Naive thymus-derived CD4-positive, alpha-beta T cell (primary cell): ENCODE measurements at regions of chr3 and their contacts with region 1.

Region 1: GRCh38 chr3:49939858-49940666 is at the start of gene RBM6:
- DNase-seq: peak; percentile 84 to 95 (median 93)
- ATAC-seq: peak; percentile 98
- H3K4me3 ChIP-seq: peak within 1 kb of the TSS; percentile 88
- H3K4me3 Mint-ChIP-seq: peak within 1 kb of the TSS; percentile 93 to 100 (median 98)
- H3K27ac ChIP-seq: peak within 1 kb of the TSS; percentile 97
- H3K27ac Mint-ChIP-seq: peak within 1 kb of the TSS; percentile 91 to 99 (median 97)
- H3K4me1 ChIP-seq: peaks cover 8 to 15% of the 10 kb centered on the region in 2 donors
- H3K4me1 Mint-ChIP-seq: peaks cover 7 to 41% (median 32%) of the 10 kb centered on the region in 7 donors
- H3K27me3 ChIP-seq: no peaks in the 10 kb centered on the region
- H3K27me3 Mint-ChIP-seq: peaks cover 0 to 1% (median 0%) of the 10 kb centered on the region in 5 donors
- total RNA-seq, gene RBM6: 103 to 208 (median 153) TPM

Region 2: GRCh38 chr3:49786241-49786958 is 153.7 kb before region 1 on chr3 and contains the start of gene IP6K1:
- CTCF ChIA-PET with region 1: no interaction called
- POLR2A ChIA-PET with region 1: no interaction called
- intact Hi-C with region 1: loop called in 1 of 2 experiments (anchors 1 kb)
- DNase-seq: peak; percentile 90 to 100 (median 99)
- ATAC-seq: peak; percentile 99
- H3K4me3 ChIP-seq: peak within 1 kb of the TSS; percentile 80
- H3K4me3 Mint-ChIP-seq: peak within 1 kb of the TSS; percentile 91 to 99 (median 94)
- H3K27ac ChIP-seq: peak within 1 kb of the TSS; percentile 95
- H3K27ac Mint-ChIP-seq: peak within 1 kb of the TSS; percentile 96 to 100 (median 99)
- H3K4me1 ChIP-seq: peaks cover 9 to 12% of the 10 kb centered on the region in 2 donors
- H3K4me1 Mint-ChIP-seq: peaks cover 15 to 50% (median 32%) of the 10 kb centered on the region in 7 donors
- H3K27me3 ChIP-seq: no peaks in the 10 kb centered on the region
- H3K27me3 Mint-ChIP-seq: peaks cover 0 to 6% (median 0%) of the 10 kb centered on the region in 5 donors
- total RNA-seq, gene IP6K1: 41.8 to 57.0 (median 47.3) TPM

Region 3: GRCh38 chr3:49906004-49906743 is 33.9 kb before region 1 on chr3:
- CTCF ChIA-PET with region 1: no interaction called
- POLR2A ChIA-PET with region 1: interaction called, 4 read pairs
- intact Hi-C with region 1: loop called (anchors 1 to 2 kb)
- DNase-seq: peak; percentile 16 to 60 (median 39)
- ATAC-seq: peak; percentile 53
- H3K4me3 ChIP-seq: no peak overlapping the region
- H3K4me3 Mint-ChIP-seq: peak overlapping the region; percentile 39 to 79 (median 64)
- H3K27ac ChIP-seq: peak overlapping the region; percentile 24
- H3K27ac Mint-ChIP-seq: peak overlapping the region; percentile 63 to 91 (median 87)
- H3K4me1 ChIP-seq: peaks cover 15 to 26% of the 10 kb centered on the region in 2 donors
- H3K4me1 Mint-ChIP-seq: peaks cover 18 to 41% (median 27%) of the 10 kb centered on the region in 7 donors
- H3K27me3 ChIP-seq: no peaks in the 10 kb centered on the region
- H3K27me3 Mint-ChIP-seq: no peaks in the 10 kb centered on the region

Region 4: DNA sequence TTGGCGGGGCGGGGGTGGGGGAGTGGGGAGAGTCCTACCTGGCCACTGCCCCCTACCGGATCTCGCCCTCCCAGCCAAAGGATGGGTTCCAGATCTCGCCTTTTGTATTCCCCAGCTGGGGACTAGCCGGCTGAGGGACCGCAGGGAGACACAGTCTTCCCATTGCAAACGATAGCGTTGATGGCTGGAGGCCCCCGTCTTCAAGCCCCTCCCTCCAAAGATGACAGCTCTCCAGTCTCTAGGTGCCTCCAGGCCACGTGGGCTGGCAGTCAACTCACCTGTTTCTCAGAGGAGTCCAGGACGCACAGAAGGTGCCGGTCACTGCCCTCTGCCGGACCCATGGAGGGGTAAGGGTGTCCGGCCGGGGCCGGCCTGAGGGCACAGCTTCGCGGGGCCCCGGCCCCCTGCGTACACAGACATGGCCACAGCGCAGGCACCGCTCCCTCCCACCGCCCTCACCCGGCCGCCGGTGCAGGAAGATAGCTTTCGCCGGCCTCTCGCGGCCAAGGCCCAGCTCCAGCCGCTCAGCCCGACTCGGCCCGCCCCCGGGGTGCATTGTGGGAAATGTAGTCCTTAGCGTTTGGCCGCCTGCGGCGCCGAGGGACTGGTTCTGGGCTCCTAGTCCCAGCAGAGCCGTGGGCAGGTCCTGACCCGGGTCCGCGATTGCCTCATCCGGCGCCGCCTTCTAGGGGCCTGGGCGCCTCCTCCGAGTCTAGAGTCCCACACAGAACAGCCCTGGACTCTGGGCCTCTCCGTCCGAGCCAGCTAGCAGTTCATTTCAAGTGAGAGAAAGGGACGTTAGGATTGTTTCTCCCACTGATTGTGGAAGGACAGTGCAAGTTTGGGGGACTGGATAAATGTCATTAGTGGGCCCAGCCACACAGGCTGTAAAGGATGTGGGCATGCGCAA is 10.5 kb before region 1 on chr3 and contains the start of gene MON1A:
- CTCF ChIA-PET with region 1: interaction called, 3 read pairs
- POLR2A ChIA-PET with region 1: interaction called, 17 read pairs
- intact Hi-C with region 1: loop called (anchors 1 kb)
- DNase-seq: peak; percentile 65 to 94 (median 74)
- ATAC-seq: peak; percentile 97
- H3K4me3 ChIP-seq: peak within 1 kb of the TSS; percentile 92
- H3K4me3 Mint-ChIP-seq: peak within 1 kb of the TSS; percentile 82 to 90 (median 86)
- H3K27ac ChIP-seq: peak within 1 kb of the TSS; percentile 91
- H3K27ac Mint-ChIP-seq: peak within 1 kb of the TSS; percentile 78 to 92 (median 88)
- H3K4me1 ChIP-seq: peaks cover 6 to 13% of the 10 kb centered on the region in 2 donors
- H3K4me1 Mint-ChIP-seq: peaks cover 6 to 36% (median 31%) of the 10 kb centered on the region in 7 donors
- H3K27me3 ChIP-seq: no peaks in the 10 kb centered on the region
- H3K27me3 Mint-ChIP-seq: no peaks in the 10 kb centered on the region
- total RNA-seq, gene MON1A: 4.6 to 12.6 (median 8.6) TPM

Region 5: GRCh38 chr3:50088725-50089608 is 148.9 kb after region 1 on chr3 and contains the start of gene RBM5:
- CTCF ChIA-PET with region 1: no interaction called
- POLR2A ChIA-PET with region 1: no interaction called
- intact Hi-C with region 1: loop called (anchors 2 kb)
- DNase-seq: peak; percentile 71 to 91 (median 89)
- ATAC-seq: peak; percentile 100
- H3K4me3 ChIP-seq: peak within 1 kb of the TSS; percentile 88
- H3K4me3 Mint-ChIP-seq: peak within 1 kb of the TSS; percentile 94 to 98 (median 96)
- H3K27ac ChIP-seq: peak within 1 kb of the TSS; percentile 98
- H3K27ac Mint-ChIP-seq: peak within 1 kb of the TSS; percentile 94 to 99 (median 97)
- H3K4me1 ChIP-seq: peaks cover 16 to 23% of the 10 kb centered on the region in 2 donors
- H3K4me1 Mint-ChIP-seq: peaks cover 24 to 36% (median 32%) of the 10 kb centered on the region in 7 donors
- H3K27me3 ChIP-seq: no peaks in the 10 kb centered on the region
- H3K27me3 Mint-ChIP-seq: no peaks in the 10 kb centered on the region
- total RNA-seq, gene RBM5: 223 to 420 (median 342) TPM

Region 6: DNA sequence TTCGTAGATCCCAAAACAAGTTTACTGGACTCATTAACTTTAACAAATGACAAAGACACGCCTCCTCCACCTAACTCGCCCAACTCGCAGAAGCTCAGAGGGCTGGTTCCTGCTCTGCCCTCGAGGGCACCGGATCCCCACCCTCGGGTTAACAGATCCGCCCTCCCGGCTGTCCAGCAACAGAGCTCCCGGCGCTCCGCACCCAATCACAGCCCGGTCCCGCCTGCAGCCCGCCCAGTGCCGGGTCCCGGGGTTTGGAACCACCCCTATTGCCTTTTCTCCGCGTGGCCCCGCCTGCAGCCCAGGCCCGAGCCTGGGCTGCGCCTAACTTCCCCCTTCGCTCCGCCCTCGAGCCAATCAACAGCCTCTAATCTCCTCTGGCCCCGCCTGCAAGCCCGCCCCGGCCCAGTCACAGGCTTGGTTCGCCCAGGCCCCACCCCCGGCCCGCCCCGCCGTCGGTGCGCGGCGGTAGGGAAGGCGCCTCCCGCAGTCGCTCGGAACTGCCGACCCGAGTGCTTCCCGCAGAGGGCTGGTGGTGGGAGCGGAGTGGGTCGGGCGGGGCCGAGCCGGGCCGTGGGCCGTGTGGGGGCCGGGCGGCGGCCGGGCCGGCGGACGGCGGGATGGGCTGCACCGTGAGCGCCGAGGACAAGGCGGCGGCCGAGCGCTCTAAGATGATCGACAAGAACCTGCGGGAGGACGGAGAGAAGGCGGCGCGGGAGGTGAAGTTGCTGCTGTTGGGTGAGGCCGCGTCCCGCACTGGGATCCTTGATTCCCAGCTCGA is 295.8 kb after region 1 on chr3 and contains the start of gene GNAI2:
- CTCF ChIA-PET with region 1: no interaction called
- POLR2A ChIA-PET with region 1: no interaction called
- intact Hi-C with region 1: loop called in 1 of 2 experiments (anchors 1 kb)
- DNase-seq: peak; percentile 95 to 99 (median 99)
- ATAC-seq: peak; percentile 93
- H3K4me3 ChIP-seq: peak within 1 kb of the TSS; percentile 90
- H3K4me3 Mint-ChIP-seq: peak within 1 kb of the TSS; percentile 92 to 99 (median 98)
- H3K27ac ChIP-seq: peak within 1 kb of the TSS; percentile 84
- H3K27ac Mint-ChIP-seq: peak within 1 kb of the TSS; percentile 87 to 97 (median 95)
- H3K4me1 ChIP-seq: peaks cover 30 to 35% of the 10 kb centered on the region in 2 donors
- H3K4me1 Mint-ChIP-seq: peaks cover 12 to 41% (median 37%) of the 10 kb centered on the region in 7 donors
- H3K27me3 ChIP-seq: no peaks in the 10 kb centered on the region
- H3K27me3 Mint-ChIP-seq: no peaks in the 10 kb centered on the region
- total RNA-seq, gene GNAI2: 225 to 442 (median 282) TPM